HepG2 (cell line): ENCODE measurements at regions of chr2 and their contacts with region 1.

Region 1: DNA sequence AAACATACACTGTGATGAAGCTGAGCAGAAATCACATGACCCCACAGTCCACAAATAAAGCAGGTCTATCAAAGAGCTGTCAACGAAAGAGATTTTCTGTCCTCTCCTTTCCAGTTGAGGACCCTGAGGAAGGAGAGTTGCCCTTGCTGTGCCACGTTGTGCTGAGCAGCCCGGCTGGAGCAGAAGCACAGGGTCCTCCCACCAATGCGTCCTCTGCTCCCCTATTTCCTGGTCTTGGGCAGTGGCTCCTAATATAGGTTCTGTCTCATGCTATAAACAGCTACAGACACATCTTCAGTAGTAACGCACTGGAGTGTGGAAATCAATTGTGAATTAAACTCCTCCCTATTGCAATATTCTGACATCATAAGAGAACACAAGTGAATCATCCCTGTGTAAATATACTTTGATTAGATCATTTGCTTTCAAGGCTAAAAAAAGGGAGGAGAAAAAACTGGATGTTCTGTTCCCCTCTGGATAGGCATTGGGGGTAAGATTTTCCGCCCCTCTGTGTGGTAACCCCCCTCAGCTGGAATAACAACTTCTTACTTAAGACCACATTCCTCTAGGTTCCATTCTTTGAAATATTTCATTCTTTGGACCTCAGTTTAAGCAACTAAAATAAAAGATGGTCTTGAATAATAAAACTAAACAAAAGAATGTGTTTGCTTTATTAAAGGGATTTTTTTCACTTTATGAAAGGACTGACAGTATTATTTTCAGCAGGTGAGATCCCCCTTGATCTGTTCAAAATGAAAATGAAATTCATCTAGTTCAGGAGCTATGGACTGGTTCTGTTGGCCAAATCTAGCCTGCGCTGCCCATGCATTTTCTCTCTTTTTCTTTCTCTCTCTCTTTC is 8.3 kb upstream of the RHOB start:
- DNase-seq: peak; percentile 87
- ATAC-seq: peak; percentile 47
- H3K4me3 ChIP-seq: peak overlapping the region in 2 of 3 experiments; percentile 5 to 30; a peak in 3 of 6 replicates
- H3K27ac ChIP-seq: peak overlapping the region; percentile 43
- H3K4me1 ChIP-seq: peaks cover 53% of the 10 kb centered on the region
- H3K27me3 ChIP-seq: no peaks in the 10 kb centered on the region
- CTCF ChIP-seq: no peak
- EP300 ChIP-seq: peak; percentile 44 to 87; a peak in 3 of 4 replicates
- POLR2A ChIP-seq: no peak
- RAD21 ChIP-seq: no peak

Region 2: GRCh38 chr2:20326163-20326780 is 112.3 kb before region 1 on chr2:
- CTCF ChIA-PET with region 1: no interaction called
- POLR2A ChIA-PET with region 1: no interaction called
- in situ Hi-C with region 1: no loop called
- intact Hi-C with region 1: no loop called
- DNase-seq: peak; percentile 58
- ATAC-seq: peak; percentile 95
- H3K4me3 ChIP-seq: no peak overlapping the region
- H3K27ac ChIP-seq: no peak overlapping the region
- H3K4me1 ChIP-seq: peaks cover 24% of the 10 kb centered on the region
- H3K27me3 ChIP-seq: no peaks in the 10 kb centered on the region
- CTCF ChIP-seq: peak; percentile 88
- EP300 ChIP-seq: no peak
- POLR2A ChIP-seq: no peak
- RAD21 ChIP-seq: peak; percentile 15; the same call in 1 of the 2 replicates

Region 3: GRCh38 chr2:20398956-20399567 is 39.5 kb before region 1 on chr2:
- CTCF ChIA-PET with region 1: no interaction called
- POLR2A ChIA-PET with region 1: no interaction called
- in situ Hi-C with region 1: no loop called
- intact Hi-C with region 1: loop called (anchors 2 kb)
- DNase-seq: no peak
- ATAC-seq: no peak
- H3K4me3 ChIP-seq: no peak overlapping the region
- H3K27ac ChIP-seq: no peak overlapping the region
- H3K4me1 ChIP-seq: no peaks in the 10 kb centered on the region
- H3K27me3 ChIP-seq: peaks cover 2 to 38% of the 10 kb centered on the region in 2 experiments
- CTCF ChIP-seq: no peak
- EP300 ChIP-seq: no peak
- POLR2A ChIP-seq: no peak
- RAD21 ChIP-seq: no peak

Region 4: GRCh38 chr2:20419007-20419576 is 19.5 kb before region 1 on chr2:
- CTCF ChIA-PET with region 1: no interaction called
- POLR2A ChIA-PET with region 1: interaction called, 95 read pairs
- in situ Hi-C with region 1: no loop called
- intact Hi-C with region 1: loop called (anchors 2 kb)
- DNase-seq: peak; percentile 65
- ATAC-seq: peak; percentile 79
- H3K4me3 ChIP-seq: peak overlapping the region; percentile 38 to 68 (median 42); a peak in 5 of 6 replicates
- H3K27ac ChIP-seq: peak overlapping the region; percentile 61
- H3K4me1 ChIP-seq: peaks cover 95% of the 10 kb centered on the region
- H3K27me3 ChIP-seq: peaks cover 1 to 13% of the 10 kb centered on the region in 2 experiments
- CTCF ChIP-seq: no peak
- EP300 ChIP-seq: no peak
- POLR2A ChIP-seq: 0 out of 4 replicates have a peak, but pooled peaks of 1 of the 2 experiments have one; percentile 32
- RAD21 ChIP-seq: no peak

Region 5: DNA sequence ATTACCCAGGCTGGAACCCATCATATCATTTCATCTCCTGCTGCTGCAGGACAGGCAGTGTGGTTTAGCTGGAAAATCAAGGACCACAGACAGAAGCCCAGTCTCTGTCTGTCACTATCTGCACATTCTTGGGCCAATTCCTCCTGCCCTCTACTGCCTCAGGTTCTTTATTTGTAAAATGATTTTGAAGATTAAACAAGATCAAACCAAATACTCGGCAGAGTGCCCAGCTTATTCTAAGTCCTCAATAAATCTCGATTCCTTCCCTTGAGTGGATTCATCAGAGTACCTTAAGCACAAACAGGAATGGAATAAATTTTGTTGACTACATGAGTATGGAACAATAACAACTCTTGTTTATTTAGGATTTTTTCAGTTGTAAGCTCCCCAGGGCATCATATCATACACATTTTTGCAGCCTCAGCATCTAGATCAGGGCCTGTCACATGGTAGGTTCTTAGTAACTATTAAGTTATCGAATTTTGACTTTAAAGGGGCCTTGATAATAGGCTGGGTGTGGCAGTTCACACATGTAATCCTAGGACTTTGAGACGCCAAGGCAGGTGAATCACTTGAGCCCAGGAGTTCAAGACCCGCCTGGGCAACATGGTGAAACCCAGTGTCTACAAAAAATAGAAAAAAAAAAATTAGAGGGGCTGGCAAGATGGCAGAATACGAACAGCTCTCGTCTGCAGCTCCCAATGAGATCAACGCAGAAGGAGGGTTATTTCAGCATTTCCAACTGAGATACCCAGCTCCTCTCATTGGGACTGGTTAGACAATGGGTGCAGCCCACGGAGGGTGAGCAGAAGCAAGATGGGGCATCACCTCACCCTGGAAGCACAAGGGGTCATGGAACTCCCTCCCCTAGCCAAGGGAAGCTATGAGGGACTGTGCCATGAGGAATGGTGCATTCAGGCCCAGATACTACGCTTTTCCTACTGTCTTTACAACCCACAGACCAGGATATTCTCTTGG is 19.4 kb after region 1 on chr2:
- CTCF ChIA-PET with region 1: no interaction called
- POLR2A ChIA-PET with region 1: no interaction called
- in situ Hi-C with region 1: no loop called
- intact Hi-C with region 1: no loop called
- DNase-seq: no peak
- ATAC-seq: no peak
- H3K4me3 ChIP-seq: no peak overlapping the region
- H3K27ac ChIP-seq: no peak overlapping the region
- H3K4me1 ChIP-seq: peaks cover 37% of the 10 kb centered on the region
- H3K27me3 ChIP-seq: no peaks in the 10 kb centered on the region; a peak in 1 of 5 replicates
- CTCF ChIP-seq: no peak
- EP300 ChIP-seq: no peak
- POLR2A ChIP-seq: no peak
- RAD21 ChIP-seq: no peak

Region 6: GRCh38 chr2:20496081-20496876 is 57.7 kb after region 1 on chr2:
- CTCF ChIA-PET with region 1: no interaction called
- POLR2A ChIA-PET with region 1: no interaction called
- in situ Hi-C with region 1: no loop called
- intact Hi-C with region 1: no loop called
- DNase-seq: peak; percentile 51
- ATAC-seq: peak; percentile 62
- H3K4me3 ChIP-seq: peak overlapping the region in 1 of 3 experiments; percentile 9; a peak in 1 of 6 replicates
- H3K27ac ChIP-seq: no peak overlapping the region
- H3K4me1 ChIP-seq: peaks cover 57% of the 10 kb centered on the region
- H3K27me3 ChIP-seq: no peaks in the 10 kb centered on the region
- CTCF ChIP-seq: no peak
- EP300 ChIP-seq: no peak
- POLR2A ChIP-seq: no peak
- RAD21 ChIP-seq: no peak

Region 7: DNA sequence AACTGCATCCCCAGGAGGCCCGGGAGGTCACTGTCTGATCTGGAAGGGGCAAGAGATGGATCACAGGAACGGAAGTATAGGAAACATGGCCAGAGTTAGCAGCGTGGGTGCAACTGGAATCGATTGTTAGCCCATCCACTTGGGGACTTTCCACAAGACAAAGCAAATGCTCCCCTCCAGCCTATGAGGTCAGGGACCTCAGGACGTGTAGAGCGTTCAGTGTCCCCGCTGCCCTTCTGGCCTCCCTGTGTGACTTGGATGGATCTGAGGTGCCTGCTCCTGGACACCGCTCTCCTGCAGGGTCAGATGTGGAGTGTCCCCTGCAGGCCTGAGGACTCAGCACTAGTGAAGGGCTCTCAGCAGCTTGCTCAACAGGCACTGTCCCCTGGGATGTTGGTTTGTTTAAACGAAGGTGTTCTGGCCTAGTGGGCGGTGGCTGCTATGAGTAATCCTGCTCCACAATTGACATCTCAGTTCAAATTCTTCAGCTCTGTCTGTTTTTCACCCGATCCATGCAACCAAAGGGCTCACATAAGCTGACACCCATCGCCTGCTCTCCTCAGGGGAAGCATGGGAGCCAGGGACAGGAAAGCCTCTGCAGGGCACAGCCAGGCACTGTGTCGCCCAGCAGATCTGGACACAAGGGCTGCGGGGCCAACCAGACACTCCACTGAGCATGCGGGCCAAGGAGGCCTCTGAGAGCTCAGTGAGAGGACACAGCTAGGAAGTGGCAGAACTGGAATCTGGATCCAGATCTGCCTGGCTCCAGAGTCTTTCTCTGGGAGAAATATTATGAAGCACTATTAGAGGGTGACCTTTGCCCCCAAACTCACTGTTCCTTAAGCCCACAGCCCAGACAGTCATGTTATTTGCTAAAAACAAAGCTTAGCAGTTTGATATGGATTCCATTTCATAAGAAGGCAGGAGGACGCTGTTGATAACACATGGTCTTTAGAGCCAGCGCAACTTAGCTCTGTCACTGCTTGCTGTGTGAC is 86.8 kb after region 1 on chr2:
- CTCF ChIA-PET with region 1: interaction called, 3 read pairs
- POLR2A ChIA-PET with region 1: interaction called, 17 read pairs
- in situ Hi-C with region 1: no loop called
- intact Hi-C with region 1: no loop called
- DNase-seq: peak; percentile 96
- ATAC-seq: peak; percentile 96
- H3K4me3 ChIP-seq: peak overlapping the region; percentile 2 to 56 (median 21); a peak in 5 of 6 replicates
- H3K27ac ChIP-seq: peak overlapping the region; percentile 69
- H3K4me1 ChIP-seq: peaks cover 81% of the 10 kb centered on the region
- H3K27me3 ChIP-seq: no peaks in the 10 kb centered on the region
- CTCF ChIP-seq: peak; percentile 80
- EP300 ChIP-seq: peak; percentile 48 to 53; a peak in 3 of 4 replicates
- POLR2A ChIP-seq: peak in 1 of 2 experiments; percentile 70; a peak in 2 of 4 replicates
- RAD21 ChIP-seq: peak; percentile 82

Region 8: DNA sequence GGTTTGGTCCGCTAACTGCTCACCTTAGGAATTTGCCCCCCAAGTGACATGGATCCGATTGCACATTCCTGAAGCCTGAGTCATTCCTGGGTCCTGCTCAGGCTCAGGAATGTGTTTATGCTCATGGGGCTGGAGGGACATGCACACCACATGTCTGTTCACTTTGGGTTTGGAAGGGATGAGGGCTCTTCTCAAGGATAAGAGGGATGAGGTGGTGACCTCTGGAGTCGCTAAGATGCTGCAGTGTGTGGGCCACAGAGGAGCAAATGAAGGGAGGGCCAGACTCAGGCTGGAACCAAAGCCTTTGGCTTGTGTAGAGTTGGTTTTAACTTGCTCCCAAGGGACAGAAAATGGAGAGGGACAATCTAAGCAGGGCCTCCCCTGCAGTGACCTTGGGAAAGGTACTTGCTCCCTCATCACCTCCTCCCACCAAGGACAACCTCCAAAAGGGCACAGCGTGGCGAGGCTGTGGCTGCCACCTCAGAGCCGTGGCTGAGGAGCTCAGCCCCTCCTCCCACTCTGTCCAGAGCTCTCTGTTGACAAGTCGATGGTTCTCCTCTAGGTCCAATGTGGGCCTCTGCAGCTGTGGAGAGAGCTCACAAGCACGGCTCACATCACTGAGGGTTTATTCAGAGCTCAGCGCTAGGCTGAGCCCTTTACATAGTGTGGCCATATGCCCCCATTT is 146.2 kb after region 1 on chr2:
- CTCF ChIA-PET with region 1: no interaction called
- POLR2A ChIA-PET with region 1: interaction called, 1,537 read pairs
- in situ Hi-C with region 1: no loop called
- intact Hi-C with region 1: no loop called
- DNase-seq: peak; percentile 98
- ATAC-seq: peak; percentile 79
- H3K4me3 ChIP-seq: peak overlapping the region in 1 of 3 experiments; percentile 52; a peak in 2 of 6 replicates
- H3K27ac ChIP-seq: peak overlapping the region; percentile 97
- H3K4me1 ChIP-seq: peaks cover 100% of the 10 kb centered on the region
- H3K27me3 ChIP-seq: no peaks in the 10 kb centered on the region
- CTCF ChIP-seq: peak; percentile 41; the same call in 1 of the 2 replicates
- EP300 ChIP-seq: peak; percentile 63 to 88; a peak in 3 of 4 replicates
- POLR2A ChIP-seq: peak in 1 of 2 experiments; percentile 73; a peak in 1 of 4 replicates
- RAD21 ChIP-seq: peak; percentile 58

Region 9: GRCh38 chr2:20617892-20618467 is 179.4 kb after region 1 on chr2:
- CTCF ChIA-PET with region 1: no interaction called
- POLR2A ChIA-PET with region 1: interaction called, 21 read pairs
- in situ Hi-C with region 1: no loop called
- intact Hi-C with region 1: no loop called
- DNase-seq: peak; percentile 94
- ATAC-seq: peak; percentile 92
- H3K4me3 ChIP-seq: no peak overlapping the region
- H3K27ac ChIP-seq: peak overlapping the region; percentile 95
- H3K4me1 ChIP-seq: peaks cover 63% of the 10 kb centered on the region
- H3K27me3 ChIP-seq: no peaks in the 10 kb centered on the region
- CTCF ChIP-seq: peak; percentile 60
- EP300 ChIP-seq: peak; percentile 49 to 56; a peak in 2 of 4 replicates
- POLR2A ChIP-seq: peak in 1 of 2 experiments; percentile 53; a peak in 1 of 4 replicates
- RAD21 ChIP-seq: peak; percentile 92